SK-N-SH (cell line): ENCODE measurements at regions of chr16 and their contacts with region 1.

Region 1: GRCh38 chr16:67384778-67385510 is 8.4 kb downstream of the TPPP3 start:
- DNase-seq: no peak
- H3K4me3 ChIP-seq: no peak overlapping the region
- H3K27ac ChIP-seq: peak overlapping the region in 1 of 2 experiments; percentile 60; a peak in 2 of 4 replicates
- H3K4me1 ChIP-seq: peaks cover 4 to 10% of the 10 kb centered on the region in 2 experiments; a peak in 2 of 4 replicates
- H3K27me3 ChIP-seq: no peaks in the 10 kb centered on the region
- CTCF ChIP-seq: no peak
- EP300 ChIP-seq: no peak
- RAD21 ChIP-seq: no peak

Region 2: DNA sequence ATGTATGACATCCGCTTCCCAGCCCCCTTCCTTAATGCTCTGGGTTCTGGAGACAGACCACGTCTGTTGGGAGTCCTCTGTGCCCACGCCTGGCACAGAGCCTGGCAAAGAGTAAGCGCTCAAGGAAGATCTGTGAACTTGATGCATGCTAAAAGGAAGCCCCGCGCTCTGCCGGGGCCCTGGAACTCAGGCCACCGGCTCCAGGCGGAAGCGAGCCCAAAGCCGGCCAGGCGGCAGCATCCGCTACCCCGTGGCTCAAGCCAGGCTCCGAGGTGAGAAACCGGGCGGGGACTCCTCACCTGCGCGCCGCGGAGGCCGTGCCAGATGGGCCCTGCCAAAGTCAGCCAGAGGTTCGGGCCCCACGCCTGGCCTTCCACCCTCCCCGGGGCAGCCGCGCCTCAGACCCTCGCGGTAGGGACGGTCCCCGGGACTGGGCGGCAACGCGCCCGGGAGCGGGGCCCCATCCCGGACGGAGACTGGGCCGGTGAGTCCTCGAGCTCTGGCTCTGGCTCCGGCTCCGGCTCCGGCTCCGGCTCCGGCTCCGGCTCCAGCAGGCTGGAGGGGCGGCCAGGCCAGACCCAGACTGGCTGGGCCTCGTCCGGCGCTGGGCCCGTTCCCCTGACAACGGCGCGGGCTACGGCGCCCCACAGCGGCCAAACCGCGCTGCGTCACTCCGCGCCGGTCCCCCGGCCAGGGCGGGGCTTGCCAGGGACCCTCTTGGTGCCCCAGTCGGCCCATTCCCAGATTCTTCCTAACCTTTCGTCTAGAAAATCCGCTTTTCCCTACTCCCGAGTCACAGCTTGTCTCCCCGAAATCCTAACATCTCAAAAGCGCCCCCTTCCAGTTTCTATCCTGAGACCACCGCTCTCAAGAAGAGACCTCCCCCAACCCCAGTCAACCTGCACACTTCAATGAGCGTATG is 31.2 kb after region 1 on chr16 and contains the start of gene ZDHHC1:
- CTCF ChIA-PET with region 1: interaction called, 13 read pairs
- POLR2A ChIA-PET with region 1: no interaction called
- DNase-seq: peak; percentile 96
- H3K4me3 ChIP-seq: peak within 1 kb of the TSS; percentile 64 to 66
- H3K27ac ChIP-seq: peak within 1 kb of the TSS; percentile 53 to 79
- H3K4me1 ChIP-seq: no peaks in the 10 kb centered on the region; a peak in 1 of 4 replicates
- H3K27me3 ChIP-seq: no peaks in the 10 kb centered on the region
- CTCF ChIP-seq: peak; percentile 56
- EP300 ChIP-seq: no peak
- RAD21 ChIP-seq: peak; percentile 70
- polyA plus RNA-seq, gene ZDHHC1: 14.2 and 15.8 TPM in 2 replicates

Region 3: DNA sequence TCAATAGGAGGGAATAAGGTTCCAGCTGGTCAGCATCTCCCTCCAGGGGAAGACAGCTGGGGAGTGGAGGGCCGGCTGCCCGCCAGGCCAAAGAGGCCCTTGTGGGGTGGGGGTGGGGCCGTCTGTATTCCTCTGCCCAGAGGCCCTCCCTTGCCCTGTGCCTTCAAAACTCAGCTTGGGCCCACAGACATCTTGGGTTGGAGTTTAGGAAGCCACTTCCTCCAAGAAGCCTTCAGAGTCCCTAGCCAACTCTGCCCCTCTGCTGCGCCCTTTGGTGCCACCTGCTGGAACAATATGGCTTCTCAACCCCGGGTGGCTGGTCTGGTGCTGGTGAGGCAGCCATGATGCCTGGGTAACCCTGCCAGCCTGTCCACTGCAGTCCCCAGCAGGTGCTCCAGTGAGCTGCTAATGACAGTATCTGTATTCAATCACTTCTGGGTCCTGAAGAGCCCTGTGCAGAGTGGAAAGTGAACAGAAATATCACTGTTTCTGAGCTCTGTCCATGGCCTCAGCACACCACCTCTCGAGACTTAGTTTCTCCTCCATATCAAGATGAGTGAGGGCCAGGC is 62.6 kb after region 1 on chr16:
- CTCF ChIA-PET with region 1: no interaction called
- POLR2A ChIA-PET with region 1: no interaction called
- DNase-seq: peak; percentile 70
- H3K4me3 ChIP-seq: no peak overlapping the region
- H3K27ac ChIP-seq: no peak overlapping the region
- H3K4me1 ChIP-seq: peaks cover 0 to 32% of the 10 kb centered on the region in 2 experiments; a peak in 1 of 4 replicates
- H3K27me3 ChIP-seq: no peaks in the 10 kb centered on the region
- CTCF ChIP-seq: peak; percentile 55
- EP300 ChIP-seq: no peak
- RAD21 ChIP-seq: peak; percentile 44; the same call in 1 of the 2 replicates